ENCODE measurements at regions of chr5 and their contacts with region 1.

Region 1: DNA sequence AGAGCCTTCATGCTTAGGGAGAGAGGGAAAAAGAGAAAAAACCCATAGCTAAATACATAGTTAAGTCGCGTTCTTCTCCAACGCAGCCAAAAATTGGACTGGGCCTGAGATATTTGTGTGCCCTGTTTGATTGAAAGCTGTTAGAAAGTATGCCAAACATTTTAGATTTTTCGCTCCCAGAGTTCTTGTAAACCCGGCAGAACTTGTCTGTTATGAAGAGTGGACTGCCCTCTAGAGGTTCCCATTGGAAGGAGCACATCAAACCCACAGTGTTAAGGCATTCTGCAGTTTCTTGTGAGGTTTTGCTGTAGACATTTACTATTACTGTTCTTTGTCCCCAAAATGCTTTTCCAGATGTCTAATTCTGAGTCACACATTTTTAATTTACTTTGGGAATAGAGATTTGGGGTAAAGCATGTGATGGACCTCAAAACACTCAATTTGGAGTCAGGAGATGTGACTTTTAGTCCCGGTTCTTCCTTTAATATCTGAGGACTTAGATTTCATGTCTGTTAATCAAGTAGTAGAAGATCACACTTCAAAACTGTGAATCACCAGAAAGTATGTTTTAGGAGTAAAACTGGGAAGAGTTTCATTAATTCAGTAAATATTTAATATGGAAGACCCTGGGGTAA is 96.6 kb downstream of the PCSK1 start:
- DNase-seq: no peak
- ATAC-seq: peak; percentile 91
- H3K4me3 Mint-ChIP-seq: no peak overlapping the region
- H3K27ac Mint-ChIP-seq: no peak overlapping the region
- H3K4me1 Mint-ChIP-seq: no peaks in the 10 kb centered on the region
- H3K27me3 Mint-ChIP-seq: peaks cover 6% of the 10 kb centered on the region
- CTCF ChIP-seq: peak; percentile 23

Region 2: DNA sequence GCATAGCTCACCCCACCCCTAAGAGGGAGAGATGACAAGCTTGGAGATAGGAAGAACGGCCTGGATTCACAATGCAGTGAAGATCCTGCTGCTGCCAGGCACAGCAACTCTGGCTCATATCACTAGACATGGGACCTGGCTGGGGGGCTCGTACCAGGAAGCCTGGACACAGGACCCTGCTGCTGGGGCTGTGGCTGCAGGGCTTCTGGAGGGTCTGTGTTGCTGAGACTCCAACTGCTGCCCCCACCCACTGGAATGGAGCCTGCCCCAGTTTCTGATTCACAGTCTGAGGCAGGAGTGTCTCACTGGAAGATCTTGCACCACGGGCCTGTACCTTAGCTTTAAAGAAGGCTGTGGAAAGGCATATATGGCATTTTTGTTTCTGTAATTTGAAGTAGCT is 483.0 kb before region 1 on chr5:
- CTCF ChIA-PET with region 1: interaction called, 96 read pairs
- POLR2A ChIA-PET with region 1: no interaction called
- intact Hi-C with region 1: loop called (anchors 1 kb)
- DNase-seq: no peak
- ATAC-seq: no peak
- H3K4me3 Mint-ChIP-seq: no peak overlapping the region
- H3K27ac Mint-ChIP-seq: no peak overlapping the region
- H3K4me1 Mint-ChIP-seq: no peaks in the 10 kb centered on the region
- H3K27me3 Mint-ChIP-seq: no peaks in the 10 kb centered on the region
- CTCF ChIP-seq: no peak

Region 3: DNA sequence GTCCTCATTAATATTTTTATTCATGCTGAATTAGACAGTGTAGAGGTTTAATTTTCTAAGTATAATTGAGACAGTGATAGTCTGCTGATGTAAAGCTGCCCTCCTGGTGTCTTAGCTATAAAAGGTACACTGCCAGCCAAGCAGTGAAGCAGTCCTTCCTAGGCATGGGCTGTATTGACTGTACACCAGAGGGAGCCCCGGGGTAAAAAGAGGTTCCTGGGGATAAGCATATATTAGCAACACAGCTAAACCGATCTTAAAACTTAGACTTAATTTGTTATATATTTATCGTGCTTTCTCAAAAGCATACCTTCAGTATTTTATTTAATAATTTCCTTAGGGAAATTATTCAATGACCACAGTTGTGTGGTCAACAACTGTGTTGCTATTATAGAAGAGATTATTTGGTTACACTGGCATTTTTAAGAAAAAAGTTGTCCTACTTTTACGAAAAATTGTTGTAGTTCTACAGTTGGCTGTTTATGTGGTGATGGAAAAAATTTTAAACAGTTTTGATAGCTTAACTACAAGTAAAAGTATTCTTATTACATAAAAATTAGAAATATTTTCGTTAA is 443.6 kb before region 1 on chr5:
- CTCF ChIA-PET with region 1: interaction called, 16 read pairs
- POLR2A ChIA-PET with region 1: no interaction called
- intact Hi-C with region 1: loop called (anchors 1 kb)
- DNase-seq: no peak
- ATAC-seq: peak; percentile 54
- H3K4me3 Mint-ChIP-seq: no peak overlapping the region
- H3K27ac Mint-ChIP-seq: no peak overlapping the region
- H3K4me1 Mint-ChIP-seq: no peaks in the 10 kb centered on the region
- H3K27me3 Mint-ChIP-seq: no peaks in the 10 kb centered on the region
- CTCF ChIP-seq: no peak

Region 4: GRCh38 chr5:96220610-96221390 is 115.7 kb before region 1 on chr5:
- CTCF ChIA-PET with region 1: no interaction called
- POLR2A ChIA-PET with region 1: no interaction called
- intact Hi-C with region 1: no loop called
- DNase-seq: no peak
- ATAC-seq: no peak
- H3K4me3 Mint-ChIP-seq: no peak overlapping the region
- H3K27ac Mint-ChIP-seq: no peak overlapping the region
- H3K4me1 Mint-ChIP-seq: no peaks in the 10 kb centered on the region
- H3K27me3 Mint-ChIP-seq: no peaks in the 10 kb centered on the region
- CTCF ChIP-seq: no peak

Region 5: DNA sequence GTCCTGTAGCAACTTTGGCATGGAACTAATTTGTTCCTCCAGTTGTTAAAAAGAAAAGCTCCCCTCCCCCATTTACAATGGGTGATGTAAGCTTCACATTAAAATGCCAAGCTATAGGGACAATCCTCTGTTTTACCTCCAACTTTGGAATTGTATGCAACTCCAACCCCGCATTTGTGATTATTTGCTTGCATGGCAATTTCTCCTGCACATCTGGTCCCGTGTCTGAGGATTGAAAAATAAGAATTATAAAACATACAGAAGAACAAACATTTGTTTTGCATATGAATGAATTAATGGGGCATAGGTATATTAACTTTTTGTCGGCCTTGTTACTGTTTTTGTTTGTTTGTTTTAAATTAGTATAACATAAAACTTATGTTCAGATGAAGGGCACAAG is 79.4 kb after region 1 on chr5:
- CTCF ChIA-PET with region 1: no interaction called
- POLR2A ChIA-PET with region 1: no interaction called
- intact Hi-C with region 1: no loop called
- DNase-seq: no peak
- ATAC-seq: no peak
- H3K4me3 Mint-ChIP-seq: no peak overlapping the region
- H3K27ac Mint-ChIP-seq: no peak overlapping the region
- H3K4me1 Mint-ChIP-seq: no peaks in the 10 kb centered on the region
- H3K27me3 Mint-ChIP-seq: peaks cover 5% of the 10 kb centered on the region
- CTCF ChIP-seq: no peak

Measured in activated B cell treated with CpG ODN at 0.5 μM for 24 hours (primary cell).